SK-N-SH (cell line): ENCODE measurements at regions of chr5 and their contacts with region 1.

Region 1: GRCh38 chr5:173887610-173888472 is at the start of gene CPEB4:
- DNase-seq: peak; percentile 98
- H3K4me3 ChIP-seq: peak within 1 kb of the TSS; percentile 87 to 90
- H3K27ac ChIP-seq: peak within 1 kb of the TSS; percentile 86 to 99
- H3K4me1 ChIP-seq: peaks cover 0 to 16% of the 10 kb centered on the region in 2 experiments; a peak in 2 of 4 replicates
- H3K27me3 ChIP-seq: no peaks in the 10 kb centered on the region
- CTCF ChIP-seq: no peak
- EP300 ChIP-seq: no peak
- RAD21 ChIP-seq: no peak; the same call in 1 of the 2 replicates
- polyA plus RNA-seq, gene CPEB4: 6.8 and 9.4 TPM in 2 replicates

Region 2: GRCh38 chr5:173721256-173722232 is 166.3 kb before region 1 on chr5:
- CTCF ChIA-PET with region 1: interaction called, 3 read pairs
- POLR2A ChIA-PET with region 1: interaction called, 13 read pairs
- DNase-seq: no peak
- H3K4me3 ChIP-seq: no peak overlapping the region
- H3K27ac ChIP-seq: peak overlapping the region in 1 of 2 experiments; percentile 95; a peak in 2 of 4 replicates
- H3K4me1 ChIP-seq: peaks cover 0 to 50% of the 10 kb centered on the region in 2 experiments; a peak in 2 of 4 replicates
- H3K27me3 ChIP-seq: no peaks in the 10 kb centered on the region; the same call in 1 of the 2 replicates
- CTCF ChIP-seq: peak; percentile 17; the same call in 1 of the 2 replicates
- EP300 ChIP-seq: no peak
- RAD21 ChIP-seq: no peak

Region 3: GRCh38 chr5:173915310-173916014 is 27.6 kb after region 1 on chr5:
- CTCF ChIA-PET with region 1: interaction called, 4 read pairs
- POLR2A ChIA-PET with region 1: interaction called, 10 read pairs
- DNase-seq: peak; percentile 45
- H3K4me3 ChIP-seq: peak overlapping the region in 1 of 2 experiments; percentile 15; a peak in 1 of 4 replicates
- H3K27ac ChIP-seq: peak overlapping the region; percentile 16 to 96; a peak in 3 of 4 replicates
- H3K4me1 ChIP-seq: peaks cover 8 to 36% of the 10 kb centered on the region in 2 experiments; a peak in 3 of 4 replicates
- H3K27me3 ChIP-seq: no peaks in the 10 kb centered on the region
- CTCF ChIP-seq: no peak
- EP300 ChIP-seq: peak in 1 of 2 experiments; percentile 47; a peak in 1 of 4 replicates
- RAD21 ChIP-seq: 0 out of 2 replicates have a peak, but pooled peaks have one; percentile 6

Region 4: GRCh38 chr5:173925448-173926071 is 37.7 kb after region 1 on chr5:
- CTCF ChIA-PET with region 1: interaction called, 13 read pairs
- POLR2A ChIA-PET with region 1: interaction called, 3 read pairs
- DNase-seq: no peak
- H3K4me3 ChIP-seq: peak overlapping the region in 1 of 2 experiments; percentile 28; a peak in 1 of 4 replicates
- H3K27ac ChIP-seq: no peak overlapping the region
- H3K4me1 ChIP-seq: peaks cover 6 to 23% of the 10 kb centered on the region in 2 experiments
- H3K27me3 ChIP-seq: no peaks in the 10 kb centered on the region
- CTCF ChIP-seq: peak; percentile 67
- EP300 ChIP-seq: no peak
- RAD21 ChIP-seq: peak; percentile 77

Region 5: GRCh38 chr5:173997331-173997730 is 109.5 kb after region 1 on chr5:
- CTCF ChIA-PET with region 1: no interaction called
- POLR2A ChIA-PET with region 1: no interaction called
- DNase-seq: no peak
- H3K4me3 ChIP-seq: no peak overlapping the region
- H3K27ac ChIP-seq: no peak overlapping the region
- H3K4me1 ChIP-seq: no peaks in the 10 kb centered on the region
- H3K27me3 ChIP-seq: no peaks in the 10 kb centered on the region
- CTCF ChIP-seq: no peak
- EP300 ChIP-seq: no peak
- RAD21 ChIP-seq: no peak

Region 6: GRCh38 chr5:174030289-174030688 is 142.4 kb after region 1 on chr5:
- CTCF ChIA-PET with region 1: no interaction called
- POLR2A ChIA-PET with region 1: no interaction called
- DNase-seq: no peak
- H3K4me3 ChIP-seq: no peak overlapping the region
- H3K27ac ChIP-seq: no peak overlapping the region
- H3K4me1 ChIP-seq: no peaks in the 10 kb centered on the region
- H3K27me3 ChIP-seq: no peaks in the 10 kb centered on the region
- CTCF ChIP-seq: no peak
- EP300 ChIP-seq: no peak
- RAD21 ChIP-seq: no peak

Region 7: GRCh38 chr5:174078416-174078815 is 190.6 kb after region 1 on chr5:
- CTCF ChIA-PET with region 1: no interaction called
- POLR2A ChIA-PET with region 1: no interaction called
- DNase-seq: no peak
- H3K4me3 ChIP-seq: no peak overlapping the region
- H3K27ac ChIP-seq: no peak overlapping the region
- H3K4me1 ChIP-seq: peaks cover 0 to 32% of the 10 kb centered on the region in 2 experiments; a peak in 2 of 4 replicates
- H3K27me3 ChIP-seq: no peaks in the 10 kb centered on the region
- CTCF ChIP-seq: no peak
- EP300 ChIP-seq: no peak
- RAD21 ChIP-seq: no peak